ENCODE measurements at regions of chr1 and their contacts with region 1.

Region 1: GRCh38 chr1:234997201-234997895 is 131.3 kb downstream of the TOMM20 start:
- DNase-seq: peak; percentile 99 to 100
- ATAC-seq: peak; percentile 96
- H3K4me3 ChIP-seq: no peak overlapping the region
- H3K27ac ChIP-seq: peak overlapping the region; percentile 94 to 99
- H3K4me1 ChIP-seq: peaks cover 0 to 3% of the 10 kb centered on the region in 2 donors
- H3K27me3 ChIP-seq: no peaks in the 10 kb centered on the region

Region 2: GRCh38 chr1:235067263-235068172 is 70.2 kb after region 1 on chr1:
- intact Hi-C with region 1: loop called in 1 of 2 experiments (anchors 5 kb)
- DNase-seq: peak; percentile 92 to 95
- ATAC-seq: peak; percentile 82
- H3K4me3 ChIP-seq: no peak overlapping the region
- H3K27ac ChIP-seq: peak overlapping the region; percentile 16 to 89
- H3K4me1 ChIP-seq: peaks cover 0 to 2% of the 10 kb centered on the region in 2 donors
- H3K27me3 ChIP-seq: no peaks in the 10 kb centered on the region